ENCODE measurements at regions of chr17 and their contacts with region 1.

Region 1: GRCh38 chr17:81959362-81960129 is 1.4 kb downstream of the NOTUM start:
- DNase-seq: peak; percentile 40
- ATAC-seq: peak; percentile 49
- H3K4me3 ChIP-seq: peak overlapping the region; percentile 95 to 97 (median 96)
- H3K27ac ChIP-seq: peak overlapping the region; percentile 86
- H3K4me1 ChIP-seq: peaks cover 70% of the 10 kb centered on the region
- H3K27me3 ChIP-seq: no peaks in the 10 kb centered on the region; a peak in 1 of 5 replicates
- CTCF ChIP-seq: peak; percentile 80
- EP300 ChIP-seq: peak in 1 of 2 experiments; percentile 5; a peak in 1 of 4 replicates
- POLR2A ChIP-seq: no peak
- RAD21 ChIP-seq: peak; percentile 100

Region 2: GRCh38 chr17:81842725-81843504 is 116.6 kb before region 1 on chr17:
- CTCF ChIA-PET with region 1: no interaction called
- POLR2A ChIA-PET with region 1: no interaction called
- in situ Hi-C with region 1: no loop called
- intact Hi-C with region 1: no loop called
- DNase-seq: no peak
- ATAC-seq: no peak
- H3K4me3 ChIP-seq: no peak overlapping the region
- H3K27ac ChIP-seq: no peak overlapping the region
- H3K4me1 ChIP-seq: peaks cover 26% of the 10 kb centered on the region
- H3K27me3 ChIP-seq: no peaks in the 10 kb centered on the region
- CTCF ChIP-seq: no peak
- EP300 ChIP-seq: no peak
- POLR2A ChIP-seq: peak in 1 of 2 experiments; percentile 64; a peak in 3 of 4 replicates
- RAD21 ChIP-seq: no peak

Region 3: GRCh38 chr17:81941790-81942553 is 17.6 kb before region 1 on chr17:
- CTCF ChIA-PET with region 1: no interaction called
- POLR2A ChIA-PET with region 1: interaction called, 58 read pairs
- in situ Hi-C with region 1: no loop called
- intact Hi-C with region 1: no loop called
- DNase-seq: no peak
- ATAC-seq: peak; percentile 33
- H3K4me3 ChIP-seq: no peak overlapping the region; a peak in 1 of 6 replicates
- H3K27ac ChIP-seq: no peak overlapping the region
- H3K4me1 ChIP-seq: peaks cover 67% of the 10 kb centered on the region
- H3K27me3 ChIP-seq: peaks cover 16 to 33% of the 10 kb centered on the region in 2 experiments; a peak in 4 of 5 replicates
- CTCF ChIP-seq: no peak
- EP300 ChIP-seq: no peak
- POLR2A ChIP-seq: no peak
- RAD21 ChIP-seq: no peak

Region 4: GRCh38 chr17:81977211-81978027 is 17.9 kb after region 1 on chr17 and contains the start of gene ASPSCR1:
- CTCF ChIA-PET with region 1: interaction called, 25 read pairs
- POLR2A ChIA-PET with region 1: interaction called, 107 read pairs
- in situ Hi-C with region 1: no loop called
- intact Hi-C with region 1: no loop called
- DNase-seq: peak; percentile 80
- ATAC-seq: peak; percentile 85
- H3K4me3 ChIP-seq: peak within 1 kb of the TSS; percentile 86 to 92 (median 87)
- H3K27ac ChIP-seq: peak within 1 kb of the TSS; percentile 85
- H3K4me1 ChIP-seq: peaks cover 56% of the 10 kb centered on the region
- H3K27me3 ChIP-seq: no peaks in the 10 kb centered on the region
- CTCF ChIP-seq: no peak; the same call in 1 of the 2 replicates
- EP300 ChIP-seq: peak; percentile 23 to 69; a peak in 3 of 4 replicates
- POLR2A ChIP-seq: peak; percentile 68 to 95
- RAD21 ChIP-seq: peak; percentile 81
- total RNA-seq, gene ASPSCR1: 221 and 314 TPM in 2 replicates

Region 5: GRCh38 chr17:82003411-82004381 is 44.1 kb after region 1 on chr17:
- CTCF ChIA-PET with region 1: interaction called, 25 read pairs
- POLR2A ChIA-PET with region 1: interaction called, 72 read pairs
- in situ Hi-C with region 1: loop called (anchors 5 kb)
- intact Hi-C with region 1: no loop called
- DNase-seq: peak; percentile 92
- ATAC-seq: peak; percentile 8
- H3K4me3 ChIP-seq: peak overlapping the region in 1 of 3 experiments; percentile 29; a peak in 1 of 6 replicates
- H3K27ac ChIP-seq: peak overlapping the region; percentile 95
- H3K4me1 ChIP-seq: peaks cover 76% of the 10 kb centered on the region
- H3K27me3 ChIP-seq: no peaks in the 10 kb centered on the region
- CTCF ChIP-seq: peak; percentile 51
- EP300 ChIP-seq: peak in 1 of 2 experiments; percentile 85; a peak in 2 of 4 replicates
- POLR2A ChIP-seq: no peak
- RAD21 ChIP-seq: no peak; the same call in 1 of the 2 replicates

Region 6: DNA sequence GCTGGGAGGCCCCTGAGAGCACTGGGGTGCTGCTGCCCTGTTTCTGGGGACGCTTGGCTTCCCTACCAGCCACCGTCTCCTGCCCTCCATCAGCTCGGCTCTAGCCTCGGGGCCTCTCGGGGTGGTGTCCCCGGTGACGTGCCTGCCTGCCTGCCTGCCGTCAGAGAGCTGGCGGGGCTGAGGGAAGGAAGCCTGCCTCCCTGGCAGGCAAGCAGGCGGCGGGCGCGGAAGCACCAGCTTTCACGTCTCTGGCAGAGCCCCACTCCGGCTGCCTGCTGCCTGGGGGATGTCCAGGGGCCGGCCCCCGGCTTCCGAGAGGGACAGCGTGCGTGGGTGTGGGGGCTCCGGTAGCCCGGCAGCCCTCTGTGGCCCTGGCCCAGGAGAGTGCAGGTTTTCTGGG is 53.8 kb after region 1 on chr17:
- CTCF ChIA-PET with region 1: interaction called, 181 read pairs
- POLR2A ChIA-PET with region 1: interaction called, 120 read pairs
- in situ Hi-C with region 1: no loop called
- intact Hi-C with region 1: no loop called
- DNase-seq: no peak
- ATAC-seq: no peak; the same call in 2 of the 3 replicates
- H3K4me3 ChIP-seq: no peak overlapping the region
- H3K27ac ChIP-seq: peak overlapping the region; percentile 68
- H3K4me1 ChIP-seq: peaks cover 92% of the 10 kb centered on the region
- H3K27me3 ChIP-seq: no peaks in the 10 kb centered on the region
- CTCF ChIP-seq: no peak
- EP300 ChIP-seq: no peak
- POLR2A ChIP-seq: no peak
- RAD21 ChIP-seq: no peak